Gastrocnemius medialis (tissue), 4 donors: ENCODE measurements at regions of chr6 and their contacts with region 1.

Region 1: GRCh38 chr6:105326833-105327770 is 75.8 kb downstream of the PREP start:
- DNase-seq: peak; percentile 75 to 85
- ATAC-seq: peak; percentile 76 to 85
- H3K4me3 ChIP-seq: peak overlapping the region in 3 of 4 donors; percentile 3 to 17 (median 16)
- H3K27ac ChIP-seq: peak overlapping the region; percentile 90 to 98 (median 94)
- H3K4me1 ChIP-seq: peaks cover 60 to 88% of the 10 kb centered on the region in 2 donors
- H3K27me3 ChIP-seq: no peaks in the 10 kb centered on the region
- CTCF ChIP-seq: no peak
- POLR2A ChIP-seq: peak in 1 of 2 donors; percentile 18

Region 2: GRCh38 chr6:105097288-105097687 is 229.8 kb before region 1 on chr6:
- in situ Hi-C with region 1: no loop called
- intact Hi-C with region 1: loop called (anchors 2 kb)
- DNase-seq: no peak
- ATAC-seq: no peak
- H3K4me3 ChIP-seq: no peak overlapping the region
- H3K27ac ChIP-seq: peak overlapping the region in 1 of 4 donors; percentile 44
- H3K4me1 ChIP-seq: peaks cover 9 to 13% of the 10 kb centered on the region in 2 donors
- H3K27me3 ChIP-seq: no peaks in the 10 kb centered on the region
- CTCF ChIP-seq: no peak
- POLR2A ChIP-seq: no peak

Region 3: DNA sequence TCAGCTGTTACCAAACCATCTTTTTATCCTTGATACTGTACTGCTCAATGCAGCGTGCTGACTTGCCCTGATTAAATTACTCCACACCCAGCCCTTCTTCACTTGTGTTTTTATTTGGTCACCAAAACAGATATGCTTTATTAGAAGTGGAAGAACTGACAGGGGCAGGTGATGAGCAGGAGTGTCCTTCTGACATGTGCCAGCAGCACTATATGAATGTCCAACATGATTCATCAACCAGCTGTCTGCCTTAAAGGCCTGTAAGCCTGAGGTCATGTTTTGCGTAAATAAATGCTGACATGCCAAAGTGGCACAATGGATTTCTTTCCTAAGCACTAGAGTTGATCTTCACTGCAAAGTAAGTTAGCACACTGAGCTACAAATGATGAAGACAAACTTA is 162.7 kb before region 1 on chr6:
- in situ Hi-C with region 1: loop called in 1 of 4 experiments (anchors 10 kb)
- intact Hi-C with region 1: loop called (anchors 2 kb)
- DNase-seq: peak; percentile 88 to 92
- ATAC-seq: peak; percentile 93 to 95
- H3K4me3 ChIP-seq: peak overlapping the region in 3 of 4 donors; percentile 16 to 20 (median 19)
- H3K27ac ChIP-seq: peak overlapping the region; percentile 89 to 93 (median 91)
- H3K4me1 ChIP-seq: peaks cover 73 to 81% of the 10 kb centered on the region in 2 donors
- H3K27me3 ChIP-seq: no peaks in the 10 kb centered on the region
- CTCF ChIP-seq: no peak
- POLR2A ChIP-seq: peak; percentile 18 to 69

Region 4: GRCh38 chr6:105179244-105180065 is 147.6 kb before region 1 on chr6 and contains the start of gene POPDC3:
- in situ Hi-C with region 1: no loop called
- intact Hi-C with region 1: loop called (anchors 2 kb)
- DNase-seq: peak; percentile 53 to 78
- ATAC-seq: peak; percentile 51 to 63
- H3K4me3 ChIP-seq: peak within 1 kb of the TSS; percentile 69 to 79 (median 77)
- H3K27ac ChIP-seq: peak within 1 kb of the TSS; percentile 96 to 99 (median 99)
- H3K4me1 ChIP-seq: peaks cover 19 to 50% of the 10 kb centered on the region in 2 donors
- H3K27me3 ChIP-seq: no peaks in the 10 kb centered on the region
- CTCF ChIP-seq: peak in 2 of 5 experiments; percentile 9 to 30
- POLR2A ChIP-seq: peak; percentile 28 to 65
- total RNA-seq, gene POPDC3: 105 to 218 (median 179) TPM

Region 5: GRCh38 chr6:105272786-105273185 is 54.3 kb before region 1 on chr6:
- in situ Hi-C with region 1: no loop called
- intact Hi-C with region 1: loop called (anchors 2 kb)
- DNase-seq: peak; percentile 71 to 89
- ATAC-seq: peak; percentile 68 to 80
- H3K4me3 ChIP-seq: no peak overlapping the region
- H3K27ac ChIP-seq: peak overlapping the region; percentile 87 to 98 (median 96)
- H3K4me1 ChIP-seq: peaks cover 51 to 56% of the 10 kb centered on the region in 2 donors
- H3K27me3 ChIP-seq: no peaks in the 10 kb centered on the region
- CTCF ChIP-seq: no peak
- POLR2A ChIP-seq: no peak

Region 6: DNA sequence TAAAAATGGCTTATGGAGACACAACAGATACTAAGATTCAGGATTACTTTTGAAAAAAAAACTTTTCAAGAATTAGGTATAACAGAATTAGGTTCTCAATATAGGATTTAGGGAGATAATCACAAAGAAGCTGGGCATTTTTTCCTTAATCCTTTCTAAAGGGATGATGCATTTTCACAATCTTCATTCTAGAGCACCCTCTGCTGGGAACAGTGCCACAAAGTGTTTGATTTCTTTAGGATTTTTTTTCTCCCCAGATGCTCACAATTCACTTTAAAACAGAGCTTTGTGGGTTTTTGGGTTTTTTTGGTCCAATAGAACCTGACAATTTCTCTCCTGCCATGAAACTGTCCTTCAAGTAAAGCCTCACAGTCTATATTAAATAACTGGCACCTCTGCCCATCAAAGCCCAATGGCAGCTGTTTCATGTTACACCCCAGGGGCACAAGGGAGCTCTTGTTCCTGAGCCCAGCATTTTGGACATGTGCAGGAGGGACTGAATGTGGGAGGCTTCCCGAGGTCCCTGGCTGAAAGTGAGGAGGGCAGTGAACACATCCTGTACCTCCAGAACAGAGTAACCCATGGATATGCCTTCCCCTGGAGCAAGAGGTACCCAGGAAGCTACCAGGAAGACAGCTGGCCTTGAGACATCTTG is 36.1 kb after region 1 on chr6:
- in situ Hi-C with region 1: no loop called
- intact Hi-C with region 1: no loop called
- DNase-seq: peak in 1 of 2 donors; percentile 32
- ATAC-seq: peak; percentile 39 to 62
- H3K4me3 ChIP-seq: no peak overlapping the region
- H3K27ac ChIP-seq: peak overlapping the region; percentile 63 to 74 (median 67)
- H3K4me1 ChIP-seq: peaks cover 27 to 29% of the 10 kb centered on the region in 2 donors
- H3K27me3 ChIP-seq: no peaks in the 10 kb centered on the region
- CTCF ChIP-seq: peak in 4 of 5 experiments; percentile 31 to 37 (median 35)
- POLR2A ChIP-seq: no peak